MCF 10A (cell line): ENCODE measurements at regions of chr4 and their contacts with region 1.

Region 1: DNA sequence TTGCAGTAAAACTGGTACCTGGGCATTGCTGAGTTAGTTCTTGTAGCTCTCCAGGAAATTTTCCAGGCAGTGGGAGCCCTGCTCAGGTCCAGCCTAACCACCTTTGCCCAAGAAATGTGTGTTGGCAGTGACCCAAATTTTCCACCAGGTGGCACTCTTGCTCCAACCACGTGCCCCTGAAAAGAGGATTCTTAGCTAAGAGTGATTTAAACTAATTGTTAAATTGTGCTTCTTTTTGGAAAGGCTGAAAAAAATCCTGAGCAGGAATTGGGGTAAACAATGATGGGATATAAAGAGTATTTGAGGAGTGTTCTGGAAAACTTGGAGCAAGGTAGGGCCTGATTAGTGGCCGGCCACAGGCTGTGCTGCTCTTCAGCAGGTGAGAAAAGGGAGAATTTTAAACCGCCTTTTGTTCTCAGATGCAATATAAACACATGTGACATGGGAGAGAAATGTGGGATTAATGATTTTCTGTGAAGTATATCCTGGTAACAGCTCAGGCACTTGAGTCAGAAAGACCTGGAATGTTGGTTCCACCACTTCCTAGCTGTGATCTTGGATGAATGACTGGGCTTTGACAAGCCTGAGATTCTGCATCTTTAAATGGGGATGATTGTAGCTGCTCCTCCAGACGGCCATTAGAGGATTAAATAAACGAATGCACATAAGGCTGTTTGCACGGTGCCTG is 219.6 kb downstream of the PTTG2 start:
- DNase-seq: peak; percentile 82
- H3K4me3 Mint-ChIP-seq: no peak overlapping the region
- H3K27ac Mint-ChIP-seq: peak overlapping the region; percentile 25
- H3K4me1 Mint-ChIP-seq: peaks cover 33% of the 10 kb centered on the region
- H3K27me3 Mint-ChIP-seq: no peaks in the 10 kb centered on the region
- CTCF ChIP-seq: peak; percentile 89

Region 2: GRCh38 chr4:38062088-38062893 is 117.5 kb before region 1 on chr4:
- CTCF ChIA-PET with region 1: interaction called, 24 read pairs
- POLR2A ChIA-PET with region 1: interaction called, 5 read pairs
- intact Hi-C with region 1: loop called (anchors 2 kb)
- DNase-seq: peak; percentile 83
- H3K4me3 Mint-ChIP-seq: peak overlapping the region; percentile 66
- H3K27ac Mint-ChIP-seq: peak overlapping the region; percentile 57
- H3K4me1 Mint-ChIP-seq: peaks cover 5% of the 10 kb centered on the region
- H3K27me3 Mint-ChIP-seq: no peaks in the 10 kb centered on the region
- CTCF ChIP-seq: peak; percentile 83

Region 3: DNA sequence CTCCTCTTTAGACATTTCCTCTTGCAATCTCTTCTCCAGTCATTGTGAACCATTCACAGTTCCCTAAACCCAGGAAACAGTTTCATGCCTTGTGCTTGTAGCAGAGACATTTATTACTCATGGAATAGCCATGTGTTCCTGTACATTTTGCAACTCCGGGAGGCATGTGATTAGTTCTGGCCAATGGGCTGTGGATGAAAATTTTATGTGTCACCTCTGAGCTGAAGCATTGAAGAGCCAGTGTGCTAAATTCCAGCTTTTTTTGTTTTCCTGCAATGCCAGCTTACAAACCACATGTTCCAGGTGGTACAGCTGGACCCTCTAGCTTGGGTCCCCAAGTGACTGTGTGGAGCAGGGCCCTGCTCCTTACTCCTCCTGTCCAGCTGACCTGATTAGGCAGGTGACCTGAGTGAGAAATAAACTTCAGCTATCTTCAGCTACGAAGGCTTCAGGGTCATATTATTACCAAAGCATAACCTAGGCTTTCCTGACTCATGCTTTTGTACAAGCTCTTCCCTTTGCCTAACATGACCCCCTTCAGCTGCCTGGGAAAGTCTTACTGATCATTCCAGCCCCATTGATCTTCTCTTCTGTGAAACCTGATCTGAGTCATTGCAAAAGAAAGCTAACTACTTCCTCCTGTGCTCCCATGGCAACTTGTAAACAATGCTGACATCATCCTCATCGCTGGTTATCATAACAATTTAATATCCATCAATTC is 19.2 kb before region 1 on chr4:
- CTCF ChIA-PET with region 1: interaction called, 16 read pairs
- POLR2A ChIA-PET with region 1: interaction called, 20 read pairs
- intact Hi-C with region 1: no loop called
- DNase-seq: peak; percentile 96
- H3K4me3 Mint-ChIP-seq: peak overlapping the region; percentile 35
- H3K27ac Mint-ChIP-seq: peak overlapping the region; percentile 97
- H3K4me1 Mint-ChIP-seq: peaks cover 67% of the 10 kb centered on the region
- H3K27me3 Mint-ChIP-seq: no peaks in the 10 kb centered on the region
- CTCF ChIP-seq: no peak

Region 4: GRCh38 chr4:38313999-38314561 is 134.2 kb after region 1 on chr4:
- CTCF ChIA-PET with region 1: interaction called, 64 read pairs
- POLR2A ChIA-PET with region 1: interaction called, 13 read pairs
- intact Hi-C with region 1: loop called (anchors 1 kb)
- DNase-seq: peak; percentile 89
- H3K4me3 Mint-ChIP-seq: no peak overlapping the region
- H3K27ac Mint-ChIP-seq: peak overlapping the region; percentile 44
- H3K4me1 Mint-ChIP-seq: peaks cover 47% of the 10 kb centered on the region
- H3K27me3 Mint-ChIP-seq: no peaks in the 10 kb centered on the region
- CTCF ChIP-seq: no peak

Region 5: DNA sequence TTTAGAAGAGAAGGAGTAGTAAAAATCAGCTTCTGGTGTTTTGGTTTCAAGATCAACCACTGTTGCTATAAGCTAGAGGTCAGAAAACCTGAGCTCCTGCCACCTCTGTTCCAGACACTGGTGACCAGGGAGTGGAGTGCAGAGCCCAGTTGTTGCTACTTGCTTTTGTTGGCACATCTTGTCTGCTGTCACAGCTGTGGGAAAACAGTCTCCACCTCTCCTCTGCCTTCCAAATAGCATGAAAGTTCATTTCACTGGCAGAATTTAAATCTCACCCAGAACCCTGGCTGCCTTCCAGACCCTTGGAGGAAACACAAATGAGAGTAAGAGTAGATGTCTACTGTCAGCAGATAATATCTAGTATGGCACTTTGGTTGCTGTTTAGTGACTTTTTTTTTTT is 186.6 kb after region 1 on chr4:
- CTCF ChIA-PET with region 1: no interaction called
- POLR2A ChIA-PET with region 1: no interaction called
- intact Hi-C with region 1: no loop called
- DNase-seq: no peak
- H3K4me3 Mint-ChIP-seq: no peak overlapping the region
- H3K27ac Mint-ChIP-seq: peak overlapping the region; percentile 17
- H3K4me1 Mint-ChIP-seq: peaks cover 36% of the 10 kb centered on the region
- H3K27me3 Mint-ChIP-seq: no peaks in the 10 kb centered on the region
- CTCF ChIP-seq: no peak

Region 6: DNA sequence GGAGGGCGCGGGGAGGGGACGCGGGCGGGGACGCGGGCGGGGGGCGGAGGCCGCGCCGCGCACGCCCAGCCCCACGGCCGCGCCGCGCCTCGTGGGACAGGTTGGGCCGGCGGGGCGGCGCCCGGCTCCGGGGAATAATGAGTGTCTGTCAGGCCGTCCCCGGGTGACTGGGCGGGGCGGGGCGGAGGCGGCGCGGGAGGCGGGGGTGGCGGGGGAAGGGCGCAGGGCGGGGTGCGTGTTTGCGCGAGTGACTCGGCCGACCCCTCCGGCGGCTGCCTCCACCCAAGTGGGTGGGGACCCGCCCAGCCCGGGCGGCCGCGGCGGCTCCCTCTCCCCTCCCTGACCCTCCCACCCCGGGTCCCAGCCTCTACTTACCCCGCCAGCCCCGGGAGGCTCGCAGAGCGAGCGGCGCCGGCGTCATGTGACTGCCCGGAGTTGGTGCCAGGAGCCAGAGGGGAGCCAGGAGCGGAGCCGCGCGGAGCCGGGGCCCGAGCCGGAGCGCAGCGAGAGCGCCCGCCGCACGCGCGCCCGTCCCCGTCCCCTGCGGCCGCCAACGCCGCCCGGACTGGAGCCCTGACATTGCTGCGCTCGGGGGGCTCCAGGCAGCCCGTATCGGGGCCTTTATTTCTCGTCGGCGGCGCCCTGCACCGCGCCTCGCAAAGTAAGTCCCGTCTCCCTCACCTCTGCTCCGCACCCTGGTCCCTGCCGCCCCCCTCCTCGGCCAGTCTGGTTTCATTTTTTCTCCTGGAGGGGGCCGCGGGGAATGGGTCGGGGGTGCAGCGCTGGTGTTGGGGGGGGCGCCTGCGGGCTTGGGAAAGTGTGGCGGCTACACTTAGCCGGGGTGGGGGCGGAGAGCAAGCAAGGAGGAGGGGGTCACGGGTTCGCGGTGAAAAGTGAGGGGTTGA is 484.2 kb after region 1 on chr4 and contains the start of gene KLF3:
- CTCF ChIA-PET with region 1: interaction called, 16 read pairs
- POLR2A ChIA-PET with region 1: interaction called, 5 read pairs
- intact Hi-C with region 1: no loop called
- DNase-seq: peak; percentile 83
- H3K4me3 Mint-ChIP-seq: peak within 1 kb of the TSS; percentile 92
- H3K27ac Mint-ChIP-seq: peak within 1 kb of the TSS; percentile 76
- H3K4me1 Mint-ChIP-seq: peaks cover 11% of the 10 kb centered on the region
- H3K27me3 Mint-ChIP-seq: no peaks in the 10 kb centered on the region
- CTCF ChIP-seq: no peak
- total RNA-seq, gene KLF3: 45.3 and 51.2 TPM in 2 replicates

Region 7: GRCh38 chr4:38723726-38724474 is 544.1 kb after region 1 on chr4:
- CTCF ChIA-PET with region 1: interaction called, 145 read pairs
- POLR2A ChIA-PET with region 1: interaction called, 6 read pairs
- intact Hi-C with region 1: no loop called
- DNase-seq: no peak
- H3K4me3 Mint-ChIP-seq: no peak overlapping the region
- H3K27ac Mint-ChIP-seq: no peak overlapping the region
- H3K4me1 Mint-ChIP-seq: peaks cover 16% of the 10 kb centered on the region
- H3K27me3 Mint-ChIP-seq: no peaks in the 10 kb centered on the region
- CTCF ChIP-seq: no peak